WTC11 (cell line): ENCODE measurements at regions of chr6 and their contacts with region 1.

Region 1: GRCh38 chr6:12890171-12890790 is 173.7 kb downstream of the PHACTR1 start:
- DNase-seq: peak; percentile 70
- ATAC-seq: peak; percentile 45
- H3K4me3 Mint-ChIP-seq: no peak overlapping the region
- H3K27ac Mint-ChIP-seq: no peak overlapping the region
- H3K4me1 Mint-ChIP-seq: peaks cover 20% of the 10 kb centered on the region
- H3K27me3 Mint-ChIP-seq: no peaks in the 10 kb centered on the region
- CTCF ChIP-seq: peak; percentile 65

Region 2: GRCh38 chr6:12483712-12484111 is 406.6 kb before region 1 on chr6:
- CTCF ChIA-PET with region 1: no interaction called
- POLR2A ChIA-PET with region 1: no interaction called
- DNase-seq: no peak
- ATAC-seq: no peak
- H3K4me3 Mint-ChIP-seq: no peak overlapping the region
- H3K27ac Mint-ChIP-seq: no peak overlapping the region
- H3K4me1 Mint-ChIP-seq: peaks cover 16% of the 10 kb centered on the region
- H3K27me3 Mint-ChIP-seq: no peaks in the 10 kb centered on the region
- CTCF ChIP-seq: no peak

Region 3: GRCh38 chr6:12637960-12638641 is 252.2 kb before region 1 on chr6:
- CTCF ChIA-PET with region 1: interaction called, 61 read pairs
- POLR2A ChIA-PET with region 1: no interaction called
- DNase-seq: peak; percentile 79
- ATAC-seq: peak; percentile 93
- H3K4me3 Mint-ChIP-seq: no peak overlapping the region
- H3K27ac Mint-ChIP-seq: no peak overlapping the region
- H3K4me1 Mint-ChIP-seq: peaks cover 3% of the 10 kb centered on the region; the same call in 1 of the 2 replicates
- H3K27me3 Mint-ChIP-seq: no peaks in the 10 kb centered on the region; the same call in 1 of the 2 replicates
- CTCF ChIP-seq: peak; percentile 89

Region 4: DNA sequence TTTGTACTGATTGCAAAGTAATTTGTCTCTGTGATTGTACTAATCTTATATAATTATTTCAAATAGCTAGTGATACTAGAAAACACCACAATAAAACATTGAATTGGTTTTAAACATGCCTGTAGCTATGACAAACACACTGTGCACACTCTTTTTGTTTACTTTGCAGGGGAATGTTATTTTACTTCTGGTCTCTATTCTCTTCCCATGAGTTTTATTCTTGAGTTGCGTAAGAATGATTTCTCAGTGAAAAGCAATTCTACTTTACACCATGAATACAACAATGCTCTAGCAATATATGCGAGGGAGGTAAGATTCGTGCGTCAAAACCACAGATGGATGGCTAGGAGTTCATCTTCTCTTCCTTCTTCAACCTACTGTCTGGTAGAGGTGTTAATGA is 242.1 kb before region 1 on chr6:
- CTCF ChIA-PET with region 1: interaction called, 12 read pairs
- POLR2A ChIA-PET with region 1: no interaction called
- DNase-seq: no peak
- ATAC-seq: no peak
- H3K4me3 Mint-ChIP-seq: no peak overlapping the region
- H3K27ac Mint-ChIP-seq: no peak overlapping the region
- H3K4me1 Mint-ChIP-seq: no peaks in the 10 kb centered on the region
- H3K27me3 Mint-ChIP-seq: peaks cover 27% of the 10 kb centered on the region
- CTCF ChIP-seq: no peak

Region 5: GRCh38 chr6:12845224-12846004 is 44.9 kb before region 1 on chr6:
- CTCF ChIA-PET with region 1: interaction called, 11 read pairs
- POLR2A ChIA-PET with region 1: no interaction called
- DNase-seq: no peak
- ATAC-seq: no peak; the same call in 1 of the 2 replicates
- H3K4me3 Mint-ChIP-seq: no peak overlapping the region
- H3K27ac Mint-ChIP-seq: no peak overlapping the region
- H3K4me1 Mint-ChIP-seq: peaks cover 35% of the 10 kb centered on the region
- H3K27me3 Mint-ChIP-seq: no peaks in the 10 kb centered on the region
- CTCF ChIP-seq: no peak